ENCODE measurements at regions of chr5 and their contacts with region 1.

Region 1: DNA sequence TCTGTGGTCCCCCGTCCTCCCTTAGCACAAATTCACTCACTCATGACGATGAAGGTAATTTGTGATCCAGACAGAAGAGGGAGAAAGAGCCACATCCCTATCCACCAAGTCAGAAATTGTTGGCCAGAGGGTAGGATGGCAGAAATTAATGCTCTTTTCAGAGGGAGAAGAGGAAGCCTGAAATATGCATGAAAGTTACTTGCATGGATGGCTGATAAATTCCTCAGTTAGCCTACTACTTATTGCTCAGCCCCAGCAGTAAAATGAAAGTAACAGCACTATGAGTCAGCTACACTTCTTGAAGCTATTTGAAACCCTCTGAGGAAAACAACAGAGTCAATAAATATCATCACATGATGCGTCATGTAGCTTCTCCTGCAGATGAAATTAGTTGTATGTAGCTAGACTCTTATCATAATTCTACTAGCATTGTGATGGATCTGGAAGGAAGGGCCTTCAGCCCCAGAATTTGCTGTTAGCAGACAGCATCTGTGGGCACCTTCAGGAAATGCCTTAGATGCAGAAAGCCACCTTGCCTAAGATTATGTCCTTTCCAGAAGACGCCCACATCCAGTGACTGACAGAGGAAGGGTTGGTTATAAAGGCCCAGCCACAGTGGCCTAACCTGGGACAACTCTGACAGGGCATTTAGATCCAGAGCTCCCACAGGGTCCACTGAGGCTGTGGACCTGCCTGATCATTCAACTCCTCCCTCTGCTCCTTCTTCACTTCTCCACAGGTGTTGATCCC is 81.2 kb upstream of the CCDC112 start:
- DNase-seq: no peak
- ATAC-seq: peak; percentile 53 to 74
- H3K4me3 ChIP-seq: peak overlapping the region; percentile 3 to 32 (median 20)
- H3K27ac ChIP-seq: peak overlapping the region; percentile 89 to 95 (median 91)
- H3K4me1 ChIP-seq: peaks cover 39 to 50% of the 10 kb centered on the region in 2 donors
- H3K27me3 ChIP-seq: no peaks in the 10 kb centered on the region
- CTCF ChIP-seq: peak; percentile 26 to 48 (median 38)
- POLR2A ChIP-seq: peak in 1 of 2 donors; percentile 40

Region 2: GRCh38 chr5:115423541-115423940 is 45.9 kb after region 1 on chr5:
- in situ Hi-C with region 1: no loop called
- intact Hi-C with region 1: loop called (anchors 2 kb)
- DNase-seq: peak; percentile 72 to 91
- ATAC-seq: peak; percentile 94 to 99
- H3K4me3 ChIP-seq: no peak overlapping the region
- H3K27ac ChIP-seq: peak overlapping the region; percentile 81 to 86 (median 84)
- H3K4me1 ChIP-seq: peaks cover 51 to 60% of the 10 kb centered on the region in 2 donors
- H3K27me3 ChIP-seq: no peaks in the 10 kb centered on the region
- CTCF ChIP-seq: no peak
- POLR2A ChIP-seq: peak; percentile 31 to 43

Region 3: GRCh38 chr5:115455301-115455707 is 77.7 kb after region 1 on chr5:
- in situ Hi-C with region 1: no loop called
- intact Hi-C with region 1: loop called (anchors 1 kb)
- DNase-seq: peak; percentile 79 to 84
- ATAC-seq: peak; percentile 95 to 96
- H3K4me3 ChIP-seq: no peak overlapping the region
- H3K27ac ChIP-seq: peak overlapping the region; percentile 69 to 86 (median 79)
- H3K4me1 ChIP-seq: peaks cover 40 to 50% of the 10 kb centered on the region in 2 donors
- H3K27me3 ChIP-seq: no peaks in the 10 kb centered on the region
- CTCF ChIP-seq: no peak
- POLR2A ChIP-seq: peak in 1 of 2 donors; percentile 19

Region 4: DNA sequence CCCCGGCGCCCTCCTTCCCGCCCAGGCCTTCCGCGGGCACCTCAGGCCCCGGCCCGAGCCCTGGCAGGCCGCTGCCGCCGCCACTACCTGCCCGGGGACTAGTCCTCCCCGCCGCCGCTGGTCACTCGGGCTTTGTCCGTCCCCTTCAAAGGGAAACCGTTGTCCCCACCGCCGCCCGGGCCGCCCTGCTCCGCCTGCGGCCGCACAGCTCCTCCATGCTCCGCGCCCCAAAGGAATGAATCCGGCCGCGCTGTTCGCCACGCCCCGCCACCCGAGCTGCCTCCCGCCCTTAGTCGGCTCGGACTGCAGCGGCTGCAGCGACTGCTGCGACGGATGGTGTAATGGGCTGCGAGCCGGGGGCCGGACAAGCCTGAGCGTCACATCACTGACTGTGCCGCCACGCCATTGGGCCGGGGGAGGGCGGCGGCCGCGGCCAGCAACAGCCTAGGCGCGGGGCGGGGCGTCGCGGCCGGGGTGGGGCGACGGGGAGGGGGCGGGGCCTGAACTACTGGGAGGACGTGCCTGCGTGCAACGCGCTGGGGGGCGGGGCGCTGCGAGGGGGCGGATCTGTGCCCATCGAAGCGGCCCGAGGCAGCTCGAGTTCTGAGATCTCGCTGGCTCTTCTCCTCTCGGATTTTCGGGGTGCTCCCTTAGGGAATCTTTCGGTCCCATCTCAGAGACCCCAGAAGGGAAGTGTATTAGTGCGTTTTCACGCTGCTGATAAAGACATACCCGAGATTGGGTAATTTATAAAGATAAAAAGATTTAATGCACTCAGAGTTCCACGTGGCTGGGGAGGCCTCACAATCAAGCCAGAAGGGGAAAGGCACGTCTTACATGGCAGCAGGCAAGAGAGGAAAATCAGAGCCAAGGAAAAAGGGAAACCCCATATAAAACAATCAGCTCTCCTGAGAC is 167.1 kb after region 1 on chr5 and contains the start of gene FEM1C:
- in situ Hi-C with region 1: loop called in 2 of 4 experiments (anchors 10 kb)
- intact Hi-C with region 1: loop called (anchors 1 kb)
- DNase-seq: peak; percentile 97
- ATAC-seq: peak; percentile 86 to 88
- H3K4me3 ChIP-seq: peak within 1 kb of the TSS; percentile 85 to 96 (median 88)
- H3K27ac ChIP-seq: peak within 1 kb of the TSS; percentile 96 to 99 (median 98)
- H3K4me1 ChIP-seq: peaks cover 18 to 21% of the 10 kb centered on the region in 2 donors
- H3K27me3 ChIP-seq: no peaks in the 10 kb centered on the region
- CTCF ChIP-seq: no peak
- POLR2A ChIP-seq: peak; percentile 99
- total RNA-seq, gene FEM1C: 18.9 to 39.4 (median 33.7) TPM

Region 5: GRCh38 chr5:115571441-115571878 is 193.8 kb after region 1 on chr5:
- in situ Hi-C with region 1: no loop called
- intact Hi-C with region 1: loop called (anchors 5 kb)
- DNase-seq: no peak
- ATAC-seq: peak in 1 of 2 donors; percentile 12
- H3K4me3 ChIP-seq: no peak overlapping the region
- H3K27ac ChIP-seq: no peak overlapping the region
- H3K4me1 ChIP-seq: peaks cover 24 to 34% of the 10 kb centered on the region in 2 donors
- H3K27me3 ChIP-seq: no peaks in the 10 kb centered on the region
- CTCF ChIP-seq: no peak
- POLR2A ChIP-seq: no peak

Region 6: GRCh38 chr5:115586601-115587048 is 209.0 kb after region 1 on chr5:
- in situ Hi-C with region 1: loop called in 1 of 4 experiments (anchors 10 kb)
- intact Hi-C with region 1: loop called (anchors 5 kb)
- DNase-seq: no peak
- ATAC-seq: peak; percentile 49 to 60
- H3K4me3 ChIP-seq: no peak overlapping the region
- H3K27ac ChIP-seq: peak overlapping the region in 2 of 4 donors; percentile 25 to 29
- H3K4me1 ChIP-seq: peaks cover 33 to 42% of the 10 kb centered on the region in 2 donors
- H3K27me3 ChIP-seq: no peaks in the 10 kb centered on the region
- CTCF ChIP-seq: peak; percentile 58 to 66 (median 64)
- POLR2A ChIP-seq: no peak

Region 7: DNA sequence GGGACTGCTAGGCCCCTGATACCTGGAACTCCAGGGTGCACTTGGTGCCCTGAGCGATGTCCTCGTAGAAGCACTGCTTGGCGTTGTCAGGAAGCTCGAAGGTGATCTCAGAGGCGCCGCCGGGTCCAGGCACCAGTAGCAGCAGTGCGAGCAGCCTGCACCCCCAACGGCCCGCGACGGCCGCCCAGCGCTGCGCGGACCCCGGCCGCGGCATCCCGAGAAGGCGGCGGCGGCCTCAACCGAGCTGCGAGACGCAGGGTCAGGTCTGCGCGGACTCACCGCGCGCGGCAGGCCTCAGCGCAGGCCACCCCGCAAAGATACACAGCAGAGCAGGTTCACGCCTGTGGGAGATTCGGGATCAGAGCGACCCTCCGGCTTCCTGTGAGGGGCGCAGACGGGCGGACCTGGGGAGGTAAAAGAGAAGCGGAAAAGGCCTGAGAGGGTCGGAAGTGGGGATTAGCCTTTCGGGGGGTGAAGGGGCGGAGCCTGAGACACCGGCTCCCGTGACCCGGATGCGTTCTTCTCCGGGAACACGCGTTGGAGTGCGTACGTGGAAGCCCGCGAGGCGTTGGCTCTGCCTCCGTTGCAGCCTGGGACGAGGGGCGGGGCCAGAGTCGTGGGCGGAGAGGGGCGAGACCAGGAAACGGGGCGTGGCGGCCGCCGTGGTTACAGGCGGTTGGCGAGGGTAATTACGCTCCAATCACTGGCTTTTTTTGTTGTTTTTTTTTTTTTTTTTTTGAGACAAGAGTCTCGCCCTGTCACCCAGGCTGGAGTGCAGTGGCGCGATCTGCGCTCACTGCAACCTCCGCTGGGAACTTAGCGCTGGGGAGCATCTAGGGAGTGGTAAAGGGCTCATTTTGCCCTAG is 248.2 kb after region 1 on chr5 and contains the start of gene TMED7:
- in situ Hi-C with region 1: no loop called
- intact Hi-C with region 1: loop called (anchors 2 kb)
- DNase-seq: peak; percentile 99
- ATAC-seq: peak; percentile 97
- H3K4me3 ChIP-seq: peak within 1 kb of the TSS; percentile 75 to 99 (median 84)
- H3K27ac ChIP-seq: peak within 1 kb of the TSS; percentile 87 to 97 (median 95)
- H3K4me1 ChIP-seq: peaks cover 35% of the 10 kb centered on the region in 2 donors
- H3K27me3 ChIP-seq: no peaks in the 10 kb centered on the region
- CTCF ChIP-seq: peak in 2 of 5 experiments; percentile 12 to 38
- POLR2A ChIP-seq: peak; percentile 83 to 92
- total RNA-seq, gene TMED7: 53.1 to 122 (median 68.6) TPM

Region 8: DNA sequence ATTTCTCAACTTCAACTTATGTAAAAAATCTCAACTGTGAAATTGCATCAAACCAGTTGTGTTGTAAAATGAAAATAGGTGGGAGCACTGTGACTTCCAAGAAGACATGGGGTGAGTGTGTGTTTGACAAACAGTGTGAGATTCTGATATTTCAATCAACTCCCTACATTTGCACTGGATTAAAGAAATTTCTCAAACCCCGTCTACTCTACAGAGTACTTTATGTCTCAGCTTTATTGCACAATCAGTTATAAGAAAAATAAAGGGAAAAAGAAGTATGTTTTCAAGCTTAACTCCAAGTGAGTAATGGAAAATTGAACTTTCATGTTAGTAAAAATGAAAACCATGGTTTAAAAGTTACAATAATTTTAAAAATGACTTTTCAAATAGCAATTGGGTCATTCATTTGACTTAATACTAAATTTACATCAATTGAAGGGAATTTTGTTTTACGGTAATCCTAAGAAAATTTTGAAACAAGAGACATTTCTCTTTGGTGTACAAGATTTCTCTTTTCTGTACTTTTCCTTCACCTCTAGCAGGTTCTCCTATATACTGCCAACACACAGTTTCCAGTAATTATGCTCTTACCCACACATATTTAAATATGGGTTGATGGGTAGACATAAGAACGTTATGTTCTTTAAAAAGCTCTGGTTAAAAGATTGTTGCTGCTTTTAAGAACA is 358.5 kb after region 1 on chr5:
- in situ Hi-C with region 1: no loop called
- intact Hi-C with region 1: no loop called
- DNase-seq: no peak
- ATAC-seq: no peak
- H3K4me3 ChIP-seq: no peak overlapping the region
- H3K27ac ChIP-seq: peak overlapping the region in 1 of 4 donors; percentile 27
- H3K4me1 ChIP-seq: no peaks in the 10 kb centered on the region
- H3K27me3 ChIP-seq: no peaks in the 10 kb centered on the region
- CTCF ChIP-seq: no peak
- POLR2A ChIP-seq: no peak

Measured in gastrocnemius medialis (tissue), 4 donors.